CD14-positive monocyte (primary cell): ENCODE measurements at regions of chr3 and their contacts with region 1.

Region 1: DNA sequence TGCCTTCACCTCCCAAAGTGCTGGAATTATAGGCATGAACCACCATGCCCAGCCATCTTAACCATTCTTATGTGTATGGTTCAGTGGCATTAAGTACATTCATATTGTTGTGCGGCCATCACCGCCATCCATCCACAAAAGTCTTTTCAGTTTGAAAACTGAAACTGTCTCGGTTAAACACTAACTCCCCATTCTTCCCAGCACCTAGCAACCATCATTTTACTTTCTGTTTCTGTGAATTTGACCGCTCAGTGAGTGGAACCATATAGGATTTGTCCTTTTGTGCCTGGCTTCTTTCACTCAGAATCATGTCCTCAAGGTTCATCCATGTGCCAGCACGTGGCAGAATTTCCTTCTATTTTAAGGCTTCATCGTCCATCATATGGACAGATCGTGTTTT is 5.8 kb downstream of the MCM2 start:
- DNase-seq: no peak
- H3K4me3 ChIP-seq: no peak overlapping the region
- H3K4me3 Mint-ChIP-seq: no peak overlapping the region
- H3K27ac ChIP-seq: peak overlapping the region in 1 of 2 donors; percentile 19
- H3K27ac Mint-ChIP-seq: peak overlapping the region in 1 of 7 donors; percentile 26
- H3K4me1 ChIP-seq: peaks cover 0 to 6% of the 10 kb centered on the region in 2 donors
- H3K4me1 Mint-ChIP-seq: peaks cover 21% of the 10 kb centered on the region
- H3K27me3 ChIP-seq: no peaks in the 10 kb centered on the region
- H3K27me3 Mint-ChIP-seq: no peaks in the 10 kb centered on the region
- CTCF ChIP-seq: no peak

Region 2: DNA sequence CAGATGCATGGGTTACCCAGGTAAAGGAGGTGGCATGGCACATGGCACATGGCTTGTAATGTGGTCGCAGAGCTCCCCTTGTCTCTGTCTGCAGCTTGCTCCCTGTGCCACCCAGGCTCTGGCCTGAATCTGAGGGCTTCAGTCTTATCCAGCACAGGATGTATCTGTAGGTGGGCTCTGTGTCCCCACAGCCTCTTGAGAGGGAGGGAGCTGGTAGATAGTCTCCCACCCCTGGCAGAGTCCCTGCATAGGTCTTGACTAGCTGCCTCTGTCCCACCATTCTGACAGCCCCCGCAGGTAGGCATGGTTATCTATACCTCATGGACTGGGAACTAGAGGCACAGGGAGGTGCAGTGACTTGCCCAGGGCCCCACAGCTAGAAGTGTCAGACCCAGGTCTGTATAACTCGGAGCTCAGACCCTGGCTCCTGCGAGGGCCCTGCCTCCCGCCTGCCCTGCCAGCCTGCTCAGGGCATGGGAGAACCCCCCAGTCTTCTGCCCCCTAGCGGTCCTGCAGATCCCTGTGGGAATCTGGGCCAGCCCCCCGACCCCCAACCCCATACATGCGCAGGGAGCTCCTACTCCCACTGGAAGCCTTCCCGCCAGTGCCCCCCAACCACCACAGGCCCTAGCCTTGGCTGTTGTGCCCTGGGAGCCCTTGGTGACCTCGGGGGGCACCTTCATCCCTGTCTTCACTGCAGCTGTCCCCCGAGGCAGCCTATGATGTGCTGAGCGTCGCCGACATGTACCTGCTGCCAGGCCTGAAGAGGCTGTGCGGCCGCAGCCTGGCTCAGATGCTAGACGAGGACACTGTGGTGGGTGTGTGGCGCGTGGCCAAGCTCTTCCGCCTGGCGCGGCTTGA is 75.5 kb after region 1 on chr3:
- intact Hi-C with region 1: loop called (anchors 5 kb)
- DNase-seq: no peak
- H3K4me3 ChIP-seq: peak overlapping the region in 1 of 3 experiments; percentile 3
- H3K4me3 Mint-ChIP-seq: no peak overlapping the region
- H3K27ac ChIP-seq: no peak overlapping the region
- H3K27ac Mint-ChIP-seq: peak overlapping the region in 3 of 7 donors; percentile 67 to 85 (median 73)
- H3K4me1 ChIP-seq: peaks cover 48 to 67% of the 10 kb centered on the region in 2 donors
- H3K4me1 Mint-ChIP-seq: peaks cover 79% of the 10 kb centered on the region
- H3K27me3 ChIP-seq: no peaks in the 10 kb centered on the region
- H3K27me3 Mint-ChIP-seq: peaks cover 0 to 3% (median 2%) of the 10 kb centered on the region in 3 donors
- CTCF ChIP-seq: no peak